Posterior vena cava (tissue), 2 donors: ENCODE measurements at regions of chr14 and their contacts with region 1.

Region 1: GRCh38 chr14:64440494-64440893 is 24.8 kb upstream of the AKAP5 start:
- DNase-seq: no peak

Region 2: DNA sequence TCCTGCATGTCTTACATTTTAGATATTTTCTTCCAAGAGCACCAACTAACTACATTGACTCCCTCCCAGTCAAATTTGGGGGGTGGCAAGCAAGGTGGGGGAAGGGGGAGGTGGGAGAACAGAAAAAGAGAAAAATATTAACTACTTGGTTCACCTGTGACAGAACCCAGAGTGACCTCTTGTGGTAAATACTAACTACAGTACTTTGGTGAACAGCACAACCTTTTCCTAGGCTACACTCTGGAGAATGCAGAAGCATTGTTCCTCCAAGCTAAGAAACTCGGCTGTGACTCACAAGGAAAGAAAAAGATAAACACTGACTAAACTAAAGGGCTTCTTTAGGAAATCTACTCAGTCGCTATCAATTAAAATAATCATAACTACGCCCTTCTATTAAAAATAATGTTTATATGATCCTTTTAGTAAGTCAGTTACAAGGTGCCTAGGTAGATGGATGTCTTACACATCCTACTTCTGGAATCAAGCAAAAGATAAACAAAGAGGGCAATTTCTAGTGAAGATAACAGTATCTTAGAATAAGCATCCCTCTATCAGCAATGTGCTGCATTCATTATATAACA is 1400.6 kb before region 1 on chr14:
- intact Hi-C with region 1: no loop called
- DNase-seq: no peak

Region 3: DNA sequence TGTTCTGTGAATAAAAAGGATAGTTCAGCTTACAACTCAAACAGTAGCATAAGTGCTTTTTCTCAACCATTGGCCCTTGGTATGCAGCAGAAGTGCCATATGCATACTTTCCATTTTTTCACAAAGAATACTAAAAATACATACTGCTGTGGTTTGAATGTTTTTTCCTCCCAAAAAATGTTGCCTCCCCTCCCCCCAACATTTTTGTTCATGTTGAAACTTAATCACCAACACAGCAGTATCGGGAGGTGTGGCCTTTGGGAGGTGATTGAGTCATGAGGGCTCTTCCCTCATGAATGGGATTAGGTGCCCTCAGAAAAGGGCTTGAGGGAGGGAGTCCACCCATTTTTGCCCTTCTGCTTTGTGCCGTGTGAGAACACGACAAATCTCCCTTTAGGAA is 344.9 kb before region 1 on chr14:
- intact Hi-C with region 1: no loop called
- DNase-seq: no peak

Region 4: GRCh38 chr14:64400829-64401459 is 39.5 kb before region 1 on chr14:
- intact Hi-C with region 1: loop called in 1 of 2 experiments (anchors 2 kb)
- DNase-seq: no peak